GM12878 (cell line): ENCODE measurements at regions of chr2 and their contacts with region 1.

Region 1: DNA sequence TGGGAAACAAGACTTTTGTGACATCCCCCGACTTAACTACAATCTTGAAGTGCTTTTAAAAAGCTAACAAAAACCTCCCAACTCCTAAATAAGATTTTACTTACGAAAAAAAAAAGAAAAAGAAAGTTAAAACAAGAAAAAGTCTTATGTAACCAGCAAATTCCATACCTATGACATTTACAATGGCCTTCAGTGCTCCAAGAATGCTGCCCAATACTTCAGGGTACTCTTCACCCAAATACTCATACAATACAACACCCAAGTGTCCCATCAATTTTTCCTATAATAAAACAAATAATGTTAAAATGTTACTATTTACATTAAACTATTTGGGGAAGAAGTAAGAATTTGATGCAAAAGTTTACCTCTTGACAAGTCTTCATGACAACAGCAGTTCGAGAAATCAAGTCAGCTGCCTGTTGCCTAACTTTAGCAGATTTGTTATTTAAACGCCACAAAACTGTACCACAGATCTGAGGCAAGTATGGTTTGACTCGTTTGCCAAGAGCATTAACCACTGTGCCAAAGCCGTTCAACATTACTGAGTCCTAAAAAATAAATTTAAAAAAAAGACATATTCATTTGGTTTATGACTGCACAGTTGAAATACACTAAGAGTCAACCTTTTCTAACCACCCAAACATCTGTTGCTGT is 34.8 kb downstream of the SF3B1 start:
- DNase-seq: no peak
- ATAC-seq: no peak
- H3K4me3 ChIP-seq: no peak overlapping the region
- H3K27ac ChIP-seq: no peak overlapping the region
- H3K4me1 ChIP-seq: no peaks in the 10 kb centered on the region
- H3K27me3 ChIP-seq: no peaks in the 10 kb centered on the region
- CTCF ChIP-seq: no peak
- EP300 ChIP-seq: no peak
- POLR2A ChIP-seq: no peak
- RAD21 ChIP-seq: no peak

Region 2: GRCh38 chr2:197322724-197323720 is 77.0 kb before region 1 on chr2:
- CTCF ChIA-PET with region 1: no interaction called
- POLR2A ChIA-PET with region 1: no interaction called
- RAD21 ChIA-PET with region 1: no interaction called
- SMC1A ChIA-PET with region 1: no interaction called
- in situ Hi-C with region 1: no loop called
- intact Hi-C with region 1: no loop called
- DNase-seq: no peak
- ATAC-seq: peak; percentile 52
- H3K4me3 ChIP-seq: peak overlapping the region; percentile 32; the same call in 1 of the 2 replicates
- H3K27ac ChIP-seq: 0 out of 2 replicates have a peak overlapping the region, but pooled peaks have one; percentile 7
- H3K4me1 ChIP-seq: peaks cover 18% of the 10 kb centered on the region; the same call in 1 of the 2 replicates
- H3K27me3 ChIP-seq: no peaks in the 10 kb centered on the region
- CTCF ChIP-seq: no peak
- EP300 ChIP-seq: no peak
- POLR2A ChIP-seq: peak; percentile 51
- RAD21 ChIP-seq: no peak

Region 3: GRCh38 chr2:197369228-197369932 is 30.6 kb before region 1 on chr2:
- CTCF ChIA-PET with region 1: no interaction called
- POLR2A ChIA-PET with region 1: no interaction called
- RAD21 ChIA-PET with region 1: no interaction called
- SMC1A ChIA-PET with region 1: no interaction called
- in situ Hi-C with region 1: no loop called
- intact Hi-C with region 1: no loop called
- DNase-seq: no peak
- ATAC-seq: no peak; the same call in 2 of the 3 replicates
- H3K4me3 ChIP-seq: no peak overlapping the region
- H3K27ac ChIP-seq: no peak overlapping the region
- H3K4me1 ChIP-seq: no peaks in the 10 kb centered on the region
- H3K27me3 ChIP-seq: no peaks in the 10 kb centered on the region
- CTCF ChIP-seq: no peak
- EP300 ChIP-seq: no peak
- POLR2A ChIP-seq: no peak
- RAD21 ChIP-seq: no peak

Region 4: DNA sequence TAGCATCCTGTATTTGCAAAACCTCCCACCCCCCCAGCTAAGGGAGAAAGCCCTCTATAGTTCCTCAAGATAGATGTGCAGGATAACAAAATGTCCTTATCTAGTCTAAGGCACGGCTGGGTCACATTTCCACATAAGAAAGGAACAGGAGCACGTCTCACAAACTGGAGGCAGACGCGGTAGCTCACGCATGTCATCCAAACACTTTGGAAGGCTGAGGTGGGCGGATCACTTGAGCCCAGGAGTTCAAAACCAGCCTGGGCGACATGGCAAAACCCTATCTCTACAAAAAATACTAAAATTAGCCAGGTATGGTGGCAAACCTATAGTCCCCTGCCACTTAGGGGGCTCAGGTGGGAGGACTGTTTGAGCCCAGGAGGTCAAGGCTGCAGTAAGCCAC is 25.5 kb after region 1 on chr2:
- CTCF ChIA-PET with region 1: no interaction called
- POLR2A ChIA-PET with region 1: no interaction called
- RAD21 ChIA-PET with region 1: no interaction called
- SMC1A ChIA-PET with region 1: interaction called, 3 read pairs
- in situ Hi-C with region 1: no loop called
- intact Hi-C with region 1: loop called (anchors 2 kb)
- DNase-seq: no peak
- ATAC-seq: no peak
- H3K4me3 ChIP-seq: no peak overlapping the region
- H3K27ac ChIP-seq: no peak overlapping the region
- H3K4me1 ChIP-seq: 0 out of 2 replicates have a peak, but pooled peaks cover 3% of the 10 kb centered on the region
- H3K27me3 ChIP-seq: no peaks in the 10 kb centered on the region
- CTCF ChIP-seq: no peak
- EP300 ChIP-seq: no peak
- POLR2A ChIP-seq: no peak
- RAD21 ChIP-seq: no peak

Region 5: DNA sequence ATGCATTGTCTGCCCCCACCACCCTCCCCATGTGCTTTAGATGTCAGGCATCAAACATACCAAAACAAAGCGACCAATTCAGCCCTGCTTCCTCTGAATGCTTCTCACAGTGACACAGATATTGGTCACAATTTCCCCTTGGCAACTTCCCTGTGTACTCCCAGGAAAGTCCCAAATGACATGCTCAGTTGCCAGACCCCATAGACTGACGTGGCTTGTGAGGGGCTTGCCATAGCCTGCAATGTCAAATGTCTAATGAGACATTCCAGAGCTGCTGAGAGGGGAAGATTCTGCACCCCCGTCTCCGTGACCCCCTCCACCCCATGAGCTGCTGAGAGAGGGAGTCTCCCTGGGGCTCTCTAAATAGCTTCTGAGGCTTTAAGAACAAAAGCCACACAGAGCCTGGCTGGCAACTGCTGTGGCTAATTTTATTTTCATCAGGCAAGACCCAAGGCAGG is 228.1 kb after region 1 on chr2:
- CTCF ChIA-PET with region 1: no interaction called
- POLR2A ChIA-PET with region 1: no interaction called
- RAD21 ChIA-PET with region 1: no interaction called
- SMC1A ChIA-PET with region 1: no interaction called
- in situ Hi-C with region 1: no loop called
- intact Hi-C with region 1: no loop called
- DNase-seq: peak; percentile 79
- ATAC-seq: peak; percentile 87
- H3K4me3 ChIP-seq: 0 out of 2 replicates have a peak overlapping the region, but pooled peaks have one; percentile 18
- H3K27ac ChIP-seq: peak overlapping the region; percentile 54
- H3K4me1 ChIP-seq: peaks cover 9% of the 10 kb centered on the region
- H3K27me3 ChIP-seq: no peaks in the 10 kb centered on the region
- CTCF ChIP-seq: no peak
- EP300 ChIP-seq: no peak
- POLR2A ChIP-seq: no peak
- RAD21 ChIP-seq: peak; percentile 5; the same call in 1 of the 2 replicates